ENCODE measurements at regions of chr7 and their contacts with region 1.

Region 1: DNA sequence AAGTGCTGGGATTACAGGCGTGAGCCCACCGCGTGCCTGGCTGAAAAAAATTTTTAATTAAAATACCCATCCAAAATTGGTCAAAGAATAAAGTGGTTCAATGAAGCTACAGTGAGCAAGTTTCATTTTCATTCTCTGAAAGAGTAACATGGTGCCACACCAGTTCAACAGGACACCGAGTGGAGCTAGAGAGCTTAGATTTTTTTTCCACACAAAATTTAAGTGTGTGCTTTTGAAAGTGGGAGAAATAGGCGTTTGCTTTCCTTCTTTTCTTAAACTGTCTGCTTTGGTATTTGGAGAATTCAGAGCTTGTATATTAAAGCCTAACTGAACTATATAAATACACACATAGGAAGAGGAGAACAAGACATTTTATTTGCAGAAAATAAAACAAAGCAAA is 43.4 kb downstream of the BPGM start:
- DNase-seq: no peak
- H3K4me3 ChIP-seq: no peak overlapping the region
- H3K27ac ChIP-seq: no peak overlapping the region
- H3K4me1 ChIP-seq: no peaks in the 10 kb centered on the region
- H3K27me3 ChIP-seq: no peaks in the 10 kb centered on the region
- CTCF ChIP-seq: peak; percentile 59

Region 2: DNA sequence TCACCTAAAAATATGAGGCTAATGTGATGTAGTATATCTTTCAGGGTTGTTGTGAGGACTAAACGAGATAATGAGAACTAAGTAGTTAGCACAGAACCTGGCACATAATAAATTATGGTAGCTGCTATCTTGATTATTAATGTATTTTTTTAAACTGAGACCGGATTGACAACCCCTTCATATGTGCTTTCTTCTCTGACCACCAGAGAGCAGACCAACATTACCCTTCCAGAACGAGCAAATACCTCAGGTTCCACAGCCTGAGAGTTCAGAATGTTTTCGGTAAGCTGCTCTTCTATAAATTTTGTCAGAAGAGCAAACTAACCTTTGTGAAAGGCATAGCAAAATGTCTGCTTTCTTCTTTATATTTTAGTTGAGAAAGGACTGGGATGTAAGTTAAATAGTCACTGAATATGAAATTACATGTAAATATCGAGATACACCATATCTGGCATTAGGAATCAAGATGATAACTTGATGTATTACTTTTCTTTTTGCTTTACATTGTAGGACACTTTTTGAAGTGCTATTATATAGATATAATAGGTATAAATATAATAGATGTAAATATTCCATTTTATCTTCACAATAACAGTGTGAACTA is 57.0 kb before region 1 on chr7:
- CTCF ChIA-PET with region 1: interaction called, 5 read pairs
- POLR2A ChIA-PET with region 1: no interaction called
- intact Hi-C with region 1: loop called (anchors 2 kb)
- DNase-seq: peak in 1 of 2 experiments; percentile 32
- H3K4me3 ChIP-seq: no peak overlapping the region
- H3K27ac ChIP-seq: no peak overlapping the region
- H3K4me1 ChIP-seq: peaks cover 6% of the 10 kb centered on the region
- H3K27me3 ChIP-seq: no peaks in the 10 kb centered on the region
- CTCF ChIP-seq: peak; percentile 83

Region 3: DNA sequence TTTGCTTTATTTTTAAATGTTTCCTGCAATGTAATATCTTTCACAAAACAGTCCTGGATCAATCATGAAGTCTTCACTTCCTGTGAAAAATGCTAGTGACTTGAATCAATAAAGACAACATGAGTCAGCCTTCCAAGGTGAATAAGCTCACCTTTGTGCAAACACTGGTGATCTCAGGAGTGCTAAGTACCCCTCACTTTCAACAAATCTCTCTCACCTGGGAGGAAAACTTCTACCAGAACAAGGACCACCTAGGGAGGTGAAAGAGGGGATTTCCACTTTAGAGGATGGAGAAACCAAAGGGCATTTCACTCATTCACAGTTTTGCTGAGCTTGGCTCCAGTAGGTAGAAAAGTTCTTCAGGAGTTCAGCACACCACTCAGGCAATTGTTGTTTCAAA is 154.2 kb after region 1 on chr7:
- CTCF ChIA-PET with region 1: interaction called, 7 read pairs
- POLR2A ChIA-PET with region 1: interaction called, 11 read pairs
- intact Hi-C with region 1: no loop called
- DNase-seq: peak in 1 of 2 experiments; percentile 67
- H3K4me3 ChIP-seq: no peak overlapping the region
- H3K27ac ChIP-seq: 0 out of 2 replicates have a peak overlapping the region, but pooled peaks have one; percentile 22
- H3K4me1 ChIP-seq: peaks cover 15% of the 10 kb centered on the region
- H3K27me3 ChIP-seq: no peaks in the 10 kb centered on the region
- CTCF ChIP-seq: no peak

Region 4: GRCh38 chr7:134920026-134920753 is 230.2 kb after region 1 on chr7:
- CTCF ChIA-PET with region 1: no interaction called
- POLR2A ChIA-PET with region 1: no interaction called
- intact Hi-C with region 1: no loop called
- DNase-seq: no peak
- H3K4me3 ChIP-seq: no peak overlapping the region
- H3K27ac ChIP-seq: no peak overlapping the region
- H3K4me1 ChIP-seq: no peaks in the 10 kb centered on the region
- H3K27me3 ChIP-seq: no peaks in the 10 kb centered on the region
- CTCF ChIP-seq: no peak

Region 5: GRCh38 chr7:134954197-134955082 is 264.4 kb after region 1 on chr7:
- CTCF ChIA-PET with region 1: interaction called, 3 read pairs
- POLR2A ChIA-PET with region 1: no interaction called
- intact Hi-C with region 1: loop called (anchors 1 kb)
- DNase-seq: peak in 1 of 2 experiments; percentile 40
- H3K4me3 ChIP-seq: no peak overlapping the region
- H3K27ac ChIP-seq: no peak overlapping the region
- H3K4me1 ChIP-seq: no peaks in the 10 kb centered on the region
- H3K27me3 ChIP-seq: no peaks in the 10 kb centered on the region
- CTCF ChIP-seq: peak; percentile 87

Region 6: DNA sequence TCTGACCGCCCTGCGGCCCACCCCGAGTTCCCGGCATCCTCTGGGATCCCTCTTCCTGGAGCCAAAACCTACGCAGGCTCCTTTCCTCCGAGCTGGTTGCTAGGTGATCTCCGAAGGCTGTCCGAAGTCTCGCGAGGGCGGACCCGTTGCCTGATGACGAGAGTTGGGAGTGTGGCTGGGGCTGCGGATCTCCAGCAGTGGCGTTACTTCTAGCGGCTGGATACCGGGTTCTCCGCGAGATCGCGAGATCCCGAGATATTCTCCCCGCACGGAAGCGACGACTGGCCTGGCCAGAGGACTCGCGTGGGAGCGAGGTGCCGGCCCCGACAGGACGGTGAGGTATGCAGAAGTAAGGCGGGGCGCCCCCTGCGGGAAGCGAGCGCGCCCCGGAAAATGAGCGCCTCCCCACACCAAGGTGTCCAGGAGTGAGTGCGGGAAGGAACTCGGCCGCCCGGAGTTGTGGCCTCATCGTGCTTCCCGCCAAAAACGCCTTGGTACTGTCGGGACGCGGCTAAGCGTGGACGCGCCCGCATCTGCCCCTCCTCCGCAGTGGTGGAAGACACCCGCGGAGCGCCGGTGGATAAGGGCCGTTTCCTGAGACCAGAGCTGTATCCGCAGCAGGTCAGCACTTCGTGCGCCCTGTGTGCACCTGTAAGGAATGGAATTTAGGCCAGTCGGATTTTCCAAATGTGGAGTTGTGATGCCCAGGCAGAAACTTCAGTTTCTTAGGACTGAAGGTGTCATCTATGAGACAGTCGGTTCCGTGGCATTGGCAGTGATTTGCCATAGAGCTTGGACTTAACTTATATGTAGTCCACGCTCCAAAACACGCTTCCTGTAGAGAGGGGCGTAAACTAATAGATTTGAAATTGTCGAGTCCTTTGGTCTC is 296.6 kb after region 1 on chr7 and contains the start of gene AGBL3:
- CTCF ChIA-PET with region 1: no interaction called
- POLR2A ChIA-PET with region 1: no interaction called
- intact Hi-C with region 1: no loop called
- DNase-seq: peak; percentile 88 to 96
- H3K4me3 ChIP-seq: peak within 1 kb of the TSS; percentile 75
- H3K27ac ChIP-seq: peak within 1 kb of the TSS; percentile 26
- H3K4me1 ChIP-seq: peaks cover 18% of the 10 kb centered on the region
- H3K27me3 ChIP-seq: no peaks in the 10 kb centered on the region
- CTCF ChIP-seq: peak; percentile 80
- total RNA-seq, gene AGBL3: 3.2 and 4.3 TPM in 2 replicates

Region 7: GRCh38 chr7:135170274-135170997 is 480.4 kb after region 1 on chr7 and contains the start of gene CYREN:
- CTCF ChIA-PET with region 1: no interaction called
- POLR2A ChIA-PET with region 1: no interaction called
- intact Hi-C with region 1: loop called (anchors 1 kb)
- DNase-seq: peak; percentile 88 to 95
- H3K4me3 ChIP-seq: peak within 1 kb of the TSS; percentile 88
- H3K27ac ChIP-seq: peak within 1 kb of the TSS; percentile 81
- H3K4me1 ChIP-seq: peaks cover 19% of the 10 kb centered on the region
- H3K27me3 ChIP-seq: no peaks in the 10 kb centered on the region
- CTCF ChIP-seq: peak; percentile 73
- total RNA-seq, gene CYREN: 70.5 and 76.0 TPM in 2 replicates

Region 8: GRCh38 chr7:135736586-135737305 is 1046.7 kb after region 1 on chr7:
- CTCF ChIA-PET with region 1: interaction called, 17 read pairs
- POLR2A ChIA-PET with region 1: no interaction called
- intact Hi-C with region 1: no loop called
- DNase-seq: no peak
- H3K4me3 ChIP-seq: no peak overlapping the region
- H3K27ac ChIP-seq: no peak overlapping the region
- H3K4me1 ChIP-seq: no peaks in the 10 kb centered on the region
- H3K27me3 ChIP-seq: no peaks in the 10 kb centered on the region
- CTCF ChIP-seq: no peak; the same call in 1 of the 2 replicates

Measured in PC-9 (cell line).